ENCODE measurements at regions of chr16 and their contacts with region 1.

Region 1: DNA sequence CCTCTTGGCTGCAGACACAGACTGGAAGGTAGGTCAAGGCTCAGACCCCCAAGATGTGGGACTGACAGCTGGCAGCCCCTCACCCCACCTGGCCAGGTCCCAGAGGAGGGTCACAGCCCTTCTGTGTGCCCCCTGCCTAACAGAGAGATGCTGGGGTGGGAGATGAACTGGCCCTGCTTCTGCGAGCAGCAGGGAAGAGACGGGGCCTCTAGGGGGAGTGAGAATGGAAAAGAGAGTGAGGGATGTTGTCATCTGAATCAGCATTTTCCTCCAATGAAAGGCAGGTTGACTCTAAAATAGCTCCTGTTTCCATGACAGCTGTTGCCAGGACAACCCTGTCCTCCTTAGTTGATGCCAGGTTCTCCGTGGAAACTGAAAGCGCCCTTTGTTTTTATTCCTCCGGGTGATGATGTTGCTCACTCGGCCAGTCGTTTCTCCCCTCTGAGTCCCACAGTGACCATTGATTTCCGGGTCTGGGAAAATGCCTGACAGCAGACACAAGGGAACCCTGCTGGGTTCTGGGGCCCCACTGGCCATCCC is 4.9 kb upstream of the NDRG4 start:
- DNase-seq: peak in 1 of 2 donors; percentile 36
- ATAC-seq: peak; percentile 57 to 71
- H3K4me3 ChIP-seq: peak overlapping the region in 1 of 4 donors; percentile 21
- H3K27ac ChIP-seq: peak overlapping the region; percentile 10 to 54 (median 32)
- H3K4me1 ChIP-seq: no peaks in the 10 kb centered on the region
- H3K27me3 ChIP-seq: no peaks in the 10 kb centered on the region
- CTCF ChIP-seq: peak in 2 of 5 experiments; percentile 11 to 17
- POLR2A ChIP-seq: no peak

Region 2: GRCh38 chr16:58331024-58331707 is 163.9 kb before region 1 on chr16:
- in situ Hi-C with region 1: loop called in 1 of 4 experiments (anchors 5 kb)
- intact Hi-C with region 1: no loop called
- DNase-seq: no peak
- ATAC-seq: no peak
- H3K4me3 ChIP-seq: no peak overlapping the region
- H3K27ac ChIP-seq: no peak overlapping the region
- H3K4me1 ChIP-seq: no peaks in the 10 kb centered on the region
- H3K27me3 ChIP-seq: peaks cover 0 to 3% (median 0%) of the 10 kb centered on the region in 3 donors
- CTCF ChIP-seq: no peak
- POLR2A ChIP-seq: no peak

Region 3: DNA sequence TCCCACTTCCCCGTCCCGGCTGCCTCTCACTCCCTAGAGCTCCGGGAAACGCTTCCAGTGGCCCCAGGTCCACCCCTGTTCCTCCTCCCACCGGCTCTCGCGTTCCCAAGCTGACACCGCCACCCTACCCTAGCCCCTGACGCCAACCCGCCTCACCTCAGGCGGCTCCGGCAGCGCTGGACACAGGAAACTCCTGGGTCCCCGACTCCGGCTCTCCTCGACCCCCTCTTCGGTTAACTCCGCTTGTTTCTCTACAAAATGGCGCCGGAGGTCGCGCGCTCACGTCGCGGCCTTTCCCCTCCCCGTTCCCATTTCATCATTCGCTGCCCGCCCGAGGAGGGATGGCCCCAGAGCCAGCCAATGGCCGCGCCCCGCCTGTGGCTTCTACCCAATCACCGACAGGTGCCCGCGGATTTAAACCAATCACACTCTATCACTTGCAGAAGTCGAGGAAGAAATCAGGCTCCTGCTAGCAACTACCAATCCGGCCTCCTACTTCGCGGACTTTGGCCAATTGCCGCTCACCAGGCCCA is 134.6 kb after region 1 on chr16 and contains the start of gene CNOT1:
- in situ Hi-C with region 1: no loop called
- intact Hi-C with region 1: no loop called
- DNase-seq: peak; percentile 99 to 100
- ATAC-seq: peak; percentile 92 to 96
- H3K4me3 ChIP-seq: peak within 1 kb of the TSS; percentile 85 to 92 (median 88)
- H3K27ac ChIP-seq: peak within 1 kb of the TSS; percentile 94 to 99 (median 96)
- H3K4me1 ChIP-seq: peaks cover 21 to 35% of the 10 kb centered on the region in 2 donors
- H3K27me3 ChIP-seq: no peaks in the 10 kb centered on the region
- CTCF ChIP-seq: peak in 1 of 5 experiments; percentile 15
- POLR2A ChIP-seq: peak; percentile 87 to 89
- total RNA-seq, gene CNOT1: 54.7 to 119 (median 87.2) TPM

Region 4: DNA sequence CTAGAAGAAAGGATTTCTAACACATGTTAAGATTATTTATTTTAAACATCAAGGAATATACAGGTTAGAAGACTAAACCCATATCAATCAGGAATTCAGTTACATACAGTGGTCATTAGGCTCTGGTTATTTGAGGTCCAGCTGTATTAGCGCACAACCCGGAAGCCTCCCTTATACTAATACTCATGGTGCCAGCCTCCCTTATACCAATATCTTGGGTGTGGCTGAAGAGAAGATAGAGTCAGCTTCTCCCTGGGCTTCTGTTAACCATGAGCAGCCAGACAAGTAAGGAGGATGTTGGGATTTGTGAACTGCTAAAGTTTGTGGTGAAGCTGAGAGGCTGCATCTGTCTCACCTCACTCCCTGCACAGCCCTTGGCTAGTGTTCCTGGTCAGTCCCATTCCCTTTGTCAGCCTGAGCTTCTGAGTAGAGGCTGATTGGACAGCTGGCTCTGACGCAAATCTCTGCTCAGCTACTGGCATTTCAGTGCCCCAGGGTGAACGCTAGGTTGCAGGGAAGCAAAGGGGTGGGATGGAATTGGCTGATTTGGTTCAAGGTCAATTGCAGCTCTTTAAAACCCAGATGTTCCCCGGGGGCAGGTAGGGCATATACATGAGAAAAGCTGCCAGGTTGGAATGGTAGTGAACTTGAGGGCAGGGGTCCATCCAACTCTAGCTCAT is 157.6 kb after region 1 on chr16:
- in situ Hi-C with region 1: loop called in 2 of 4 experiments (anchors 10 to 25 kb)
- intact Hi-C with region 1: no loop called
- DNase-seq: no peak
- ATAC-seq: no peak
- H3K4me3 ChIP-seq: no peak overlapping the region
- H3K27ac ChIP-seq: no peak overlapping the region
- H3K4me1 ChIP-seq: no peaks in the 10 kb centered on the region
- H3K27me3 ChIP-seq: no peaks in the 10 kb centered on the region
- CTCF ChIP-seq: no peak
- POLR2A ChIP-seq: no peak

Region 5: GRCh38 chr16:59047114-59047513 is 552.1 kb after region 1 on chr16:
- in situ Hi-C with region 1: no loop called
- intact Hi-C with region 1: no loop called
- DNase-seq: no peak
- ATAC-seq: no peak
- H3K4me3 ChIP-seq: no peak overlapping the region
- H3K27ac ChIP-seq: no peak overlapping the region
- H3K4me1 ChIP-seq: no peaks in the 10 kb centered on the region
- H3K27me3 ChIP-seq: no peaks in the 10 kb centered on the region
- CTCF ChIP-seq: no peak
- POLR2A ChIP-seq: no peak

Measured in gastrocnemius medialis (tissue), 4 donors.